GM13976 (cell line): ENCODE measurements at regions of chrX and their contacts with region 1.

Region 1: GRCh38 chrX:8743126-8743732 is 11.3 kb upstream of the ANOS1 start:
- DNase-seq: peak; percentile 52
- CTCF ChIP-seq: peak; percentile 65

Region 2: DNA sequence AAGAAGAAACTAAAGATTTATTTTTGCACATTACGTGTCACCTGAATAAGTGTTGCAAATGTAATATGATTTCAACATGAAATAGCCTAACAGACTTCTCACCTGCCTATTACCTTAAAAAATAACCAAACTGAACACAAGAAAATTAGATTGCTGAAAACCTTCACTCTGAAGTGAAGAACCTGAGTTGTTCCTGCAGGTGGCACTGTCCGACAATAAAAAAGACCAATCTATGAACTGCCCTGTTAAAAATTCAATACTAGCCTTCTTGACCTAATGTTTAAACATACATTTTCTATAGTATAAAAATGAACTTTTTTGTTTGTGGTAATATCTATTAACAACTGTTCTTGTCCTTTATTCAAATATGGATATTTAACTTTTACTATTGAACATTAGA is 746.8 kb before region 1 on chrX:
- in situ Hi-C with region 1: loop called (anchors 10 kb)
- DNase-seq: peak; percentile 26
- CTCF ChIP-seq: peak; percentile 54

Region 3: GRCh38 chrX:8647066-8647582 is 96.1 kb before region 1 on chrX:
- in situ Hi-C with region 1: no loop called
- DNase-seq: no peak
- CTCF ChIP-seq: no peak